PC-9 (cell line): ENCODE measurements at regions of chr13 and their contacts with region 1.

Region 1: DNA sequence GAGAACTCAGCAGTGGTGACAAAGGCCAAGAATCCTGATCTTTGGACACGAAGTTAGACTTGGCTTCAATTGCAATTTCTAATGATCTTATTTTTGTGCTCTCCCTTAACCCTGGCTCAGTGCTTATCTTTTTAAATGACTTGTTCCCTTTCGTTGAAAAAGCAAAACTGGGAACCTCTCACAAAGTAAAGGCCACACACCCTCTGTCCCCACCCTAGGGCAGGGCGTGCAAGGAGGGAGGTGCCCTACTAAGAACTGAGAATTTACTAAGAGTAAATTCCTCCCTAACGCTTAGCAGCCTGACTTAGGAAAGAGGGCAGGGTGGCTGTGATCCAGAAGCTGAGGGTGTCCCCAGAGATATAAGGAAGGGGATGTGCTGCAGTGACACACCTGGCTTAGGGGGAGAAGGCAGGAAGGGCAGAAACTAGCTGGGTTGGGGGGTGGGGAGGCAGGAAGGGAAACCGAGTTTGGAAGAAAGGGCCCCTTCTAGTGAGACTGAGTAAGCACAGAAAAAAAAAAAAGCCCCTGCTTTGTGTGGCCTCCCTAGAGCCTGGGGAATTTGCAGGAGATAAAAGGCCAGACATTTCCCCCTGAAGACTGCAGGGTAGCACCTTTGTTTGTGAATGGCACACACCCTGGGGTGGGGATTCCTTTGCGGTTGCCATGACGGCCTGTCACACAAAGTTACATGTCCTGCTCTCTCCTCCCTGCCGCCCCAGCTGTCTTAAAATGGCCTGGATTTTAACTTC is 435.1 kb downstream of the EFNB2 start:
- DNase-seq: peak; percentile 85 to 86
- H3K4me3 ChIP-seq: no peak overlapping the region
- H3K27ac ChIP-seq: peak overlapping the region; percentile 58
- H3K4me1 ChIP-seq: peaks cover 73% of the 10 kb centered on the region
- H3K27me3 ChIP-seq: no peaks in the 10 kb centered on the region
- CTCF ChIP-seq: no peak

Region 2: DNA sequence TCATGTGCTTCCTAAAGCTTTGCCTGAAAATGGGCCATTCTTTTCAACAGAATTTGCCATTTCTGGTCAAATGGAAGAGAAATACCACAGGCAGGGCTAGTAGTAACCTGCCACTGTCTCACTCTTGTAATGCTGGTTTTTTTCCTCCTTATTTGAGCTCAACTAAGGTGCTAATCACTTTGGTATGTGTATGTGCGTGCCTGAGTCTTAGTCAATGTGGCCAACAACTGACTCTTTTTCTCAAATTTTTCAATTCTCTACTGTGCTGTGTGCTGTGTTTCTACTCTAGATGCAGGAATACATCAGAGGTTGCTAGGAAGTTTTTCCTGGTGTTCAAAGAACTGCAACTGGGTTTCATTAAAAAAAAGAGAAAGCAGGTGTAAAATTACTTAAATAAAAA is 435.1 kb before region 1 on chr13:
- CTCF ChIA-PET with region 1: no interaction called
- POLR2A ChIA-PET with region 1: interaction called, 17 read pairs
- intact Hi-C with region 1: no loop called
- DNase-seq: peak in 1 of 2 experiments; percentile 60
- H3K4me3 ChIP-seq: no peak overlapping the region
- H3K27ac ChIP-seq: no peak overlapping the region
- H3K4me1 ChIP-seq: no peaks in the 10 kb centered on the region
- H3K27me3 ChIP-seq: no peaks in the 10 kb centered on the region
- CTCF ChIP-seq: no peak

Region 3: GRCh38 chr13:105991622-105992277 is 108.6 kb before region 1 on chr13:
- CTCF ChIA-PET with region 1: no interaction called
- POLR2A ChIA-PET with region 1: no interaction called
- intact Hi-C with region 1: loop called (anchors 2 kb)
- DNase-seq: peak; percentile 66 to 78
- H3K4me3 ChIP-seq: no peak overlapping the region
- H3K27ac ChIP-seq: no peak overlapping the region
- H3K4me1 ChIP-seq: peaks cover 13% of the 10 kb centered on the region; the same call in 1 of the 2 replicates
- H3K27me3 ChIP-seq: no peaks in the 10 kb centered on the region
- CTCF ChIP-seq: no peak

Region 4: GRCh38 chr13:106318941-106319411 is 218.6 kb after region 1 on chr13:
- CTCF ChIA-PET with region 1: no interaction called
- POLR2A ChIA-PET with region 1: no interaction called
- intact Hi-C with region 1: loop called (anchors 1 kb)
- DNase-seq: peak; percentile 72 to 98
- H3K4me3 ChIP-seq: peak overlapping the region; percentile 24; the same call in 1 of the 2 replicates
- H3K27ac ChIP-seq: peak overlapping the region; percentile 96
- H3K4me1 ChIP-seq: peaks cover 27% of the 10 kb centered on the region
- H3K27me3 ChIP-seq: no peaks in the 10 kb centered on the region
- CTCF ChIP-seq: no peak

Region 5: DNA sequence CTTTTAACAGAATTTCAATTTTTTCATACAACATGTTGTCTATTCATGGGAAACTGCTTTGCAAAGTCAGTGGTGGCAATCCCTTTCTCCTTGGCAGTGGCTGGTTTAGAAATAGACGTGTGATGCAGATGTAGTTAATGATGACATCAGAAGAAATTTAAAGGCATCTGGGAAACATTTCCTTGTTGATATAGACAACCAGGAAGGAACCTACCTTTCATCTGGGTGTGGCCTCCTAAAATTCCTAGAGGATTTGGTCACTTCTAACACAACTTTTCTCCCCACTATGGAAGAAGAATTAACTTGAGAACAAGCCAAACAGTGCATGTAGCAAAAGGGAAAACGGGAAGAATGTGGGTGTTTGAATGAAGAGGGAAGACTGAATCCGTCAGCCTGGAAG is 332.3 kb after region 1 on chr13:
- CTCF ChIA-PET with region 1: no interaction called
- POLR2A ChIA-PET with region 1: no interaction called
- intact Hi-C with region 1: loop called (anchors 5 kb)
- DNase-seq: peak; percentile 19 to 97
- H3K4me3 ChIP-seq: peak overlapping the region; percentile 1; the same call in 1 of the 2 replicates
- H3K27ac ChIP-seq: peak overlapping the region; percentile 92
- H3K4me1 ChIP-seq: peaks cover 21% of the 10 kb centered on the region
- H3K27me3 ChIP-seq: no peaks in the 10 kb centered on the region
- CTCF ChIP-seq: no peak

Region 6: DNA sequence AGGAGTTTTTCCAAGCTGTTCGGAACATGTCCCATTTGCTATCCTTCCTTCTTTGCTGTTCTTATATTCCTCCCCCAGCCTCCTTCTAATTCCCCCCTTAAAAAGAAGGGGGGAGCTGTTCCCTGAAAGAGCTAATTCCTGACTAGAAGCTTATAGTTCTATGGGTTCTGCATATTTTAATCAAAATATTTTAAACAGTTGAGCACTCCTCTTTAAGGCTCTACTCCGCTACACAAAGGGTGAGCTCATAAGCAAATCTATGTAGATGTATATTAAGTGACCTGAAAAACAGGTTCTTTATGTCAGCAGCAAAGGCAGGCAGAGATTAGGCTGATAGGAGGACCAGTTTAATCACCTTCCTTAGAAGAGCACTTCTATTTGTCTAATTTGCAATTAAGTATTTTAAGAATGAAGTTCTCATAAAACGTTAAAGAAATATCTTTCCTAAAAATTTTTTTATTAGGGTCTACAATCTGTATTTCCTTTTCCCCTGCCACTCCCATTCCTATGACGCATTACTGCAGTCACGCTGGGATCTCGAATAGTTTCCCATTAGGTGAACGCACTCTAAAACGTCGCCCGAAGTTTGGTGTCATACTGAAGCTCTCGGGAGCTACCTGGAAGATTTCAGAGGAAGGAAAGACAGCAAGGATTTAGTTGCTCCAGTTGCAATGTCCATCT is 430.0 kb after region 1 on chr13:
- CTCF ChIA-PET with region 1: interaction called, 3 read pairs
- POLR2A ChIA-PET with region 1: no interaction called
- intact Hi-C with region 1: loop called (anchors 1 kb)
- DNase-seq: peak; percentile 43 to 92
- H3K4me3 ChIP-seq: peak overlapping the region; percentile 72
- H3K27ac ChIP-seq: peak overlapping the region; percentile 83
- H3K4me1 ChIP-seq: peaks cover 53% of the 10 kb centered on the region
- H3K27me3 ChIP-seq: no peaks in the 10 kb centered on the region
- CTCF ChIP-seq: no peak